CD4-positive, alpha-beta T cell (primary cell): ENCODE measurements at regions of chr11 and their contacts with region 1.

Region 1: DNA sequence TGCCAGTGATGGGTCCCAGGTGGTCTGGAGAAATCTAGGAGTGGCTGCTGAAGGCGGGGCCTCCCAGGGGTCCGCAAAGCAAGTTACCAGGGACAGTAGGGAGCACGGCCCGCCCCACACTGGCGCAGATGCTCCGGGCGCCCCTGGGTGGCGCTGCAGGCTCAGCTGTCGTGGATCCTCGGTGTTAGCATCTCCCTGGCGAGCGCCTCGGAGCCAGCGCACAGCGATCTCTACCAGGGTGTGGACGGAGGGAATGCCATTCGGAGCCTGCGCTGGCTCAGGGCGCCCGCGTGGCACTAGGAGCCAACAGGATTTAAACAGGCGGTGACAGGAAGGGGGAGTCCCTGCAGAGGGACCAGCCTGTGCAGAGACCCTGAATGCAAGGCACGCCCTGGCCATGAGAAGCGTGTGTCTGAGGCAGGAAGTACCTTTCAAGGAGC is 20.2 kb downstream of the FADS3 start:
- DNase-seq: peak; percentile 38 to 79 (median 50)
- ATAC-seq: peak; percentile 97
- H3K4me3 ChIP-seq: no peak overlapping the region
- H3K4me3 Mint-ChIP-seq: peak overlapping the region; percentile 13
- H3K27ac ChIP-seq: no peak overlapping the region
- H3K27ac Mint-ChIP-seq: no peak overlapping the region
- H3K4me1 ChIP-seq: peaks cover 7% of the 10 kb centered on the region
- H3K4me1 Mint-ChIP-seq: peaks cover 5% of the 10 kb centered on the region
- H3K27me3 ChIP-seq: no peaks in the 10 kb centered on the region
- H3K27me3 Mint-ChIP-seq: peaks cover 7% of the 10 kb centered on the region
- CTCF ChIP-seq: peak; percentile 57

Region 2: GRCh38 chr11:62315431-62315830 is 444.3 kb after region 1 on chr11:
- CTCF ChIA-PET with region 1: no interaction called
- POLR2A ChIA-PET with region 1: no interaction called
- intact Hi-C with region 1: loop called in 1 of 2 experiments (anchors 10 kb)
- DNase-seq: peak in 2 of 14 experiments; percentile 17 to 24
- ATAC-seq: no peak
- H3K4me3 ChIP-seq: no peak overlapping the region
- H3K4me3 Mint-ChIP-seq: no peak overlapping the region
- H3K27ac ChIP-seq: no peak overlapping the region
- H3K27ac Mint-ChIP-seq: no peak overlapping the region
- H3K4me1 ChIP-seq: peaks cover 14% of the 10 kb centered on the region
- H3K4me1 Mint-ChIP-seq: peaks cover 15% of the 10 kb centered on the region
- H3K27me3 ChIP-seq: peaks cover 5 to 20% of the 10 kb centered on the region in 2 experiments
- H3K27me3 Mint-ChIP-seq: peaks cover 69% of the 10 kb centered on the region
- CTCF ChIP-seq: no peak

Region 3: DNA sequence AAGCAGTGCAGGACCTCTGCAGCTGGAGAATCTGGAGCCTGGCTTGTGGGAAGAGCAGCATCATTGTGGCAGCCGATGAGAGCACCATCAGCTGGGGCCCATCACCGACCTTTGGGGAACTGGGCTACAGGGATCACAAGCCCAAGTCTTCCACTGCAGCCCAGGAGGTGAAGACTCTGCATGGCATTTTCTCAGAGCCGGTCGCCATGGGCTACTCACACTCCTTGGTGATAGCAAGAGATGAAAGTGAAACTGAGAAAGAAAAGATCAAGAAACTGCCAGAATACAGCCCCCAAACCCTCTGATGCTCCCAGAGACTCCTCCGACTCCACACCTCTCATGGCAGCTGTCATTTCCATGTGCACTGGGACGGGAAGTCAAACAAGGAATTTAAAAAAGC is 501.7 kb after region 1 on chr11:
- CTCF ChIA-PET with region 1: no interaction called
- POLR2A ChIA-PET with region 1: no interaction called
- intact Hi-C with region 1: loop called in 1 of 2 experiments (anchors 2 kb)
- DNase-seq: no peak
- ATAC-seq: no peak
- H3K4me3 ChIP-seq: no peak overlapping the region
- H3K4me3 Mint-ChIP-seq: no peak overlapping the region
- H3K27ac ChIP-seq: no peak overlapping the region
- H3K27ac Mint-ChIP-seq: no peak overlapping the region
- H3K4me1 ChIP-seq: peaks cover 21% of the 10 kb centered on the region
- H3K4me1 Mint-ChIP-seq: peaks cover 17% of the 10 kb centered on the region
- H3K27me3 ChIP-seq: no peaks in the 10 kb centered on the region
- H3K27me3 Mint-ChIP-seq: no peaks in the 10 kb centered on the region
- CTCF ChIP-seq: no peak